ENCODE measurements at regions of chr11 and their contacts with region 1.

Region 1: GRCh38 chr11:64448599-64449556 is 89.9 kb downstream of the RPS6KA4 start:
- DNase-seq: peak; percentile 78
- ATAC-seq: peak; percentile 87
- H3K4me3 Mint-ChIP-seq: peak overlapping the region; percentile 66
- H3K27ac Mint-ChIP-seq: no peak overlapping the region
- H3K4me1 Mint-ChIP-seq: peaks cover 20% of the 10 kb centered on the region
- H3K27me3 Mint-ChIP-seq: peaks cover 21% of the 10 kb centered on the region

Region 2: DNA sequence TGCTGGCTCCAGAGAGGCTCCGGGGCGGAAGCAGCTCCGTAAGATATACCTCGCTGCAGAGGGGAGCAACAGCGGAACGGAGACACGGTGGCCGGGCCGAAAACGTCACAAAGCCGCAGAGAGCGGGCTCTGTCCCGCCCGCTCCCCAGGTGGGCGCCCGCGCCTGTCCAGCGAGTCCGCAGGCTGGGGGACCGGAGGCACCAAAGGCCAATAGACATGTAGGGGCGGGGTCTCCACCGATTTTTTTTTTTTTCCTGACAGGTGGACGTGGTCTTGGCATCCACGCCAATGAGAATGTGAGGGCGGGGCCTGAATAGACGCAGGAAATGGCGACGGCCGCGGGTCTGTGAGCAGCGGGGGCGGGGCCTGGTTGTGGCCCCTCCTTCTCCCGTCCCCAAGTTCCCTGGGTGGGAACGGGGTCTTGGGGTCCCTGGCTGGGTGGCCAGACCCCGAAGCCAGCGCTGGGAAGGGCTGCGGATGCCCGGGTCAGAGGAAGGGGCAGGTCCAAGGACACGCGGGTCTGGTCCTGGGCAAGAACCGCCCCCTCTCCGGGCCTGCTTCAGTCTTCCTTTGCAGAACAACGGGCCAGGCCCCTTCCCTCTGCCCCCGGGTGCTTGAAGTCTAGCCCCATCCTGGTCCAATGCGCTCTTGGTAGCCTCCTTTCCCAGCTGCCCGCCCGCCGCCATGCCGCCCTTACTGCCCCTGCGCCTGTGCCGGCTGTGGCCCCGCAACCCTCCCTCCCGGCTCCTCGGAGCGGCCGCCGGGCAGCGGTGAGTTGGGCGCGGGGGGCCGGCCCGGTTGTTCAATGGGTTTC is 218.5 kb before region 1 on chr11 and contains the start of gene DNAJC4:
- CTCF ChIA-PET with region 1: no interaction called
- POLR2A ChIA-PET with region 1: no interaction called
- DNase-seq: peak; percentile 94
- ATAC-seq: peak; percentile 52
- H3K4me3 Mint-ChIP-seq: peak within 1 kb of the TSS; percentile 87
- H3K27ac Mint-ChIP-seq: peak within 1 kb of the TSS; percentile 91
- H3K4me1 Mint-ChIP-seq: peaks cover 59% of the 10 kb centered on the region
- H3K27me3 Mint-ChIP-seq: no peaks in the 10 kb centered on the region
- total RNA-seq, gene DNAJC4: 38.0 to 41.3 TPM

Region 3: DNA sequence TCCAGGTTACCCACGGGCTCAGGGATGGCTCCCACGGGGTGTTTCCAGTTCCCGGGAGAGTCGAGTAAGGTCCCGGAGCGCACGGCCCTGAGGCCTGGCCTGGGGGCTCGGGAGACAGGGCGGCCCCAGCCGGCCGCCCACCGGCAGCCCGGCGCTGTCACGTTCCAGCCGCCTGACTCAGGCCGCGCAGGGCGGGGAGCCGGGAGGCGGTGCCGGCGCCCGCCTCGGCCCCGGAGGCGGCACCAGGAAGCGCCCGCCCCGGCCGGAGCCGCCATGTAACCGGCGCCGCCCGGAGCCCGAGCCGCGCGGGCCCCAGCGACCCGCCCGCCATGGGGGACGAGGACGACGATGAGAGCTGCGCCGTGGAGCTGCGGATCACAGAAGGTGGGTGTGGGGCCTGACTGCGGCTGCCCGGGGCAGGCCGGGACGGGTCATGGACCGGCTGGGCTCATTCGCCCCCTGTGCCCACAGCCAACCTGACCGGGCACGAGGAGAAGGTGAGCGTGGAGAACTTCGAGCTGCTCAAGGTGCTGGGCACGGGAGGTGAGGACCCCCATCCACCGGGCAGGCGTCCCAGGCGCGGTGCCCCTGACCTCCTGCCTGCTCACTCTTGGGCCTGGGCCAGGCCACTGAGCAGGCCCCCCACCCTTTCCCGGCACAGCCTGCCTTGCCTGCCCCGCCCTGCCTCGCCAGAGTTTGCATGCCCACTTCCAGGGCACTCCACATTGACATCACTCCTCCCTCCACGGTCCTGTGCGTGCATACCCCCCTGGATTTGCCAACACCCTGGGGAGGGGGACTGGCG is 89.8 kb before region 1 on chr11 and contains the start of gene RPS6KA4:
- CTCF ChIA-PET with region 1: interaction called, 18 read pairs
- POLR2A ChIA-PET with region 1: no interaction called
- DNase-seq: peak; percentile 51
- ATAC-seq: peak; percentile 87
- H3K4me3 Mint-ChIP-seq: peak within 1 kb of the TSS; percentile 82
- H3K27ac Mint-ChIP-seq: peak within 1 kb of the TSS; percentile 79
- H3K4me1 Mint-ChIP-seq: peaks cover 51% of the 10 kb centered on the region
- H3K27me3 Mint-ChIP-seq: no peaks in the 10 kb centered on the region
- total RNA-seq, gene RPS6KA4: 39.0 to 42.3 TPM

Region 4: GRCh38 chr11:64419818-64420485 is 28.9 kb before region 1 on chr11:
- CTCF ChIA-PET with region 1: interaction called, 15 read pairs
- POLR2A ChIA-PET with region 1: no interaction called
- DNase-seq: no peak
- ATAC-seq: no peak
- H3K4me3 Mint-ChIP-seq: no peak overlapping the region
- H3K27ac Mint-ChIP-seq: no peak overlapping the region
- H3K4me1 Mint-ChIP-seq: no peaks in the 10 kb centered on the region
- H3K27me3 Mint-ChIP-seq: peaks cover 9% of the 10 kb centered on the region

Region 5: GRCh38 chr11:64466115-64466718 is 17.3 kb after region 1 on chr11:
- CTCF ChIA-PET with region 1: interaction called, 12 read pairs
- POLR2A ChIA-PET with region 1: no interaction called
- DNase-seq: no peak
- ATAC-seq: no peak
- H3K4me3 Mint-ChIP-seq: no peak overlapping the region
- H3K27ac Mint-ChIP-seq: no peak overlapping the region
- H3K4me1 Mint-ChIP-seq: no peaks in the 10 kb centered on the region
- H3K27me3 Mint-ChIP-seq: peaks cover 22% of the 10 kb centered on the region

Region 6: DNA sequence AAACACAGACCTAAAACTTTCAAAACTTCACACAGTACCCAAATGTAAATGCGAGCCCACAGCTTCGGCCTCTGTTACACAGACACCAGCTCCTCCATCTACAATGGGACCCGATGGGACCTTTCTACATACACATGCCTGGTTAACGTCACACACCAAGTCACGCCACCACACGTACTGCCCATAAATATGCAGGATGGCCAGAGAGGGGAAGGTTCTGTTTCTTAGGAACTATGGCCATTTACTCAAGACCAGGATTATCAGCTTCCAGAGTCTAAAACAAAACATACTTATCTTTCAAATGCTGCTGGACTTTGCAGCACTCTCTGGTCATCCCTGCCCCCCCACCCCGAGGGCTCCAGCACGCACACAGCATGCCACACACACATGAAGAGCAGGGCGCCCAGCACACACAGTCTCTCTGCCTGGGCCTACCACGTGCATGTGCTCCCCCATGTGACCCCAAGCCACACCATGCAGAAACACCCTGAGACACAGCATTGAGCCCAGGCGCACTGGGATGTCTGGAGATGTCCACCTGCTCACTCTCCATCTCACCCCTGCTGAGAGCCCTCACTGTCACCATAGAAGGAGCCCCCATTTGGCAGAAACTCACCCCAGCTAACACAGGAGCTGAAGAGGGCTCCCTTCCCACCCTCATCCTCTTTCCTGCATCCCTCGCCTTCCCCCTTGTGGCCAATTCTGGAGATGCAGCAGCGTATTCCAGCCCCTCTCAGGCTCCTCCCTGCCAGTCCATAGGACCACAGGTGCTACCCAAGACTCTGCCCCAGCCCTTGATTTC is 203.9 kb after region 1 on chr11:
- CTCF ChIA-PET with region 1: interaction called, 16 read pairs
- POLR2A ChIA-PET with region 1: no interaction called
- DNase-seq: peak; percentile 83
- ATAC-seq: peak; percentile 79
- H3K4me3 Mint-ChIP-seq: no peak overlapping the region
- H3K27ac Mint-ChIP-seq: no peak overlapping the region
- H3K4me1 Mint-ChIP-seq: no peaks in the 10 kb centered on the region
- H3K27me3 Mint-ChIP-seq: no peaks in the 10 kb centered on the region

Region 7: DNA sequence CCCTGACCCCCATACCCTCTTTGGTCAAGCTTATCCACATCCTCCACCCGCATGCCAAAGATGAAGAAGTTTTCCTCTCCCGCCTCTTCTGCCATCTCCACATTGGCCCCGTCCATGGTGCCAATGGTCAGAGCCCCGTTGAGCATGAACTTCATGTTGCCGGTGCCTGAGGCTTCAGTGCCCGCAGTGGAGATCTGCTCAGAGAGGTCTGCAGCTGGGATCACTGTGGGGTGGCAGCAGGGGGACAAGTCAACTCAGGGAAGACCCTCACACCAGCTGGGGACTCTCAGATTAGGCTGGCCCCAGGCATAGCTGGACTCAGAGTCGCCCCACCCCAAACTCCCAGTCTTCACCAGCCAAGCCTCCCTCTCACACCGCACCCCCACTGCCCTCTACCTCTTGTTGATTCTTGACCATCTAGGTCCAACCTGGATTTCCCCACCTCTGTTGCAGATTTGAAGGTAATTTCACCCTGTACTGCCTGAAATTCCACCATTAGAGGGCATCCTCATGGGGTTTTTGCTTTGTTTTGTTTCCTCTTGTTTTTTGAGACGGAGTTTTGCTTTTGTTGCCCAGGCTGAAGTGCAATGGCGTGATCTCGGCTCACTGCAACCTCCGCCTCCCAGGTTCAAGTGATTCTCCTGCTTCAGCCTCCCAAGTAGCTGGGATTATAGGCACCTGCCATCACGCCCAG is 301.6 kb after region 1 on chr11:
- CTCF ChIA-PET with region 1: no interaction called
- POLR2A ChIA-PET with region 1: no interaction called
- DNase-seq: no peak
- ATAC-seq: no peak
- H3K4me3 Mint-ChIP-seq: no peak overlapping the region
- H3K27ac Mint-ChIP-seq: peak overlapping the region; percentile 79
- H3K4me1 Mint-ChIP-seq: peaks cover 36% of the 10 kb centered on the region
- H3K27me3 Mint-ChIP-seq: no peaks in the 10 kb centered on the region

Measured in activated CD8-positive, alpha-beta T cell treated with anti-CD3 and anti-CD28 coated beads, Interleukin-2, amount 10 ng/mL, durations not matched to agents 7 days and 5 days (primary cell).